Vagina (tissue), 2 donors: ENCODE measurements at regions of chr16 and their contacts with region 1.

Region 1: GRCh38 chr16:71723537-71724319 is 773 bp downstream of the PHLPP2 start:
- DNase-seq: no peak
- H3K4me3 ChIP-seq: peak overlapping the region; percentile 83 to 87
- H3K27ac ChIP-seq: peak overlapping the region; percentile 88
- H3K4me1 ChIP-seq: peaks cover 21% of the 10 kb centered on the region
- H3K27me3 ChIP-seq: no peaks in the 10 kb centered on the region
- CTCF ChIP-seq: no peak
- POLR2A ChIP-seq: peak in 1 of 2 donors; percentile 22

Region 2: DNA sequence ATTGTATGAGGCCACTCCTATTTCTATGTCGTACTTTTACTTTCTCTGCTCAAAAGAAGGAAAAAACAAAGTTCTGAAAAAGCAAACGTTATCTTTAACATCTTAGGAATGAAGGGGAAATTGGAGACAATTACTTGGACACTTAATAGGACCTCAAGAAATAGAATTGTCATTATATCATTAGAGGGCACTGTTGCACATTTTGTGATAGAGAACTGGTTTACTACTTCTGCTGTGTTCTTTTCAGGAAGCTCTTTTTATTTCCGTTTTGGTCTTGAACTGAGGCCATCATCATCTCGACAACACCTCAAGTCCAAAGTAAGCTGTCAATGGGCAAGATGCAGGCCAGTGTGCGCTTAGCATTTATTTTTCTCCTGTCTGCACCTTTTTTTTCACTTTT is 1215.0 kb before region 1 on chr16:
- intact Hi-C with region 1: loop called (anchors 5 kb)
- DNase-seq: no peak
- H3K4me3 ChIP-seq: no peak overlapping the region
- H3K27ac ChIP-seq: no peak overlapping the region
- H3K4me1 ChIP-seq: no peaks in the 10 kb centered on the region
- H3K27me3 ChIP-seq: no peaks in the 10 kb centered on the region
- CTCF ChIP-seq: no peak
- POLR2A ChIP-seq: no peak

Region 3: DNA sequence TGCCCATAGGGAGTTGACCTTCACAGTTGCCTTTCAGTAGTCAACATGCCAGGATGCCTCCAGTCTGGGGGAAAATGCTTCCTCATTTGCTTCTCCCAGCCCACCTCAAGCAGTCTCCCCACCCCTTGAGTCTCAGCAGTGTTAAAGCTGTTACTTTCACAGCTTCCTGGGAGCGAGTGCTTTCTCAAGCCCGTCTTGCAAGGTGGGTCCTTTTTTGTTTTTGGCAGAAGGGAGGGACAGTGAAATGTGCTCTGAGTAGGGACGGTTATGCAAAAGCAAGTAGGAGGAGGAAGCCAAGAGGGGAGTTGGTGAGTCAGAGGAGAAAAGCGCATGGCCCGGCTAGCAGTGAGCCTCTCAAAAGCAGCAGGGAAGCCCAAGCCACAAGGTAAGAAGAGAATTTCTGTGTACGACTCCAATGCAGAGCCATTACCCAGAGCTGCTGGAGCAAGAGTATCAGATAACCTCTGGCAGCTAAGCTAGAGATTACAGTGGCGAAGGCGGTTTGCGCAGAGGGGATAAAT is 197.6 kb before region 1 on chr16 and contains the start of gene CHST4:
- intact Hi-C with region 1: no loop called
- DNase-seq: no peak
- H3K4me3 ChIP-seq: no peak within 1 kb of the TSS
- H3K27ac ChIP-seq: no peak within 1 kb of the TSS
- H3K4me1 ChIP-seq: peaks cover 9% of the 10 kb centered on the region
- H3K27me3 ChIP-seq: no peaks in the 10 kb centered on the region
- CTCF ChIP-seq: no peak
- POLR2A ChIP-seq: no peak
- total RNA-seq, gene CHST4: not detected

Region 4: DNA sequence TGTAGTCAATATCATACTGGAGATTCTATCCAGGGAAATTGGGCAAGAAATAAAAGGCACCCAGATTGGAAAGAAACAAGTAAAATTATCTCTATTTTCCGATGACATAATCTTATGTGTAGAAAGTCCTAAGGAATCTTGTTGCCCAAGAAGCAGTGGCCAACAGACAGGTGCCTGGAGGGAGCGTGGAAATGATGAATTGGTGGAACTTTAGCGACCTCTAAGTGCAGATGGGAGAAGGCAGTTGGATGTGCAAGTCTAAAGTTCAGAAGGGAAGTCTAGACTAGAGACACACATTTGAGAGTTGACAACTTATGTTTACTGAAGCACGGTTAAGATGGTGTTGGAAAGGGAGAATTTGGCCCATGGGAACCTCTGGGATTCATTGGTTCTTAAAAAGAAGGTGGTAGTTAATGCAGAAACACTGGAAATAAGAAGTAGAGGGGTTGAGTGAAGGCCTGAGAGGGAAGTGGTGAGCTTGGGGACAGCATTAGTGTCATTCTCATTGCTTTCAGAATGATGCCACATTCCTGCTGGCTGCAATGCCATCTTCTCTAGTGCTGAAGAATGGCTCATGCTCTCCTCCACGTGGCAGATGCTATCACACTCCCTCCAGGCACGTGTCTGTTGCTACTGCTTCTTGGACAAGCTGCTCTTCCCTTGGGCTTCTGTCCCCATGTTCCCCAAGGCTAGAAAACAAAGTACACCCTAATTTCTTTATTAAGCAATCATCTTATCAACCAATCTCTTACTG is 170.9 kb before region 1 on chr16:
- intact Hi-C with region 1: no loop called
- DNase-seq: no peak
- H3K4me3 ChIP-seq: no peak overlapping the region
- H3K27ac ChIP-seq: no peak overlapping the region
- H3K4me1 ChIP-seq: no peaks in the 10 kb centered on the region
- H3K27me3 ChIP-seq: no peaks in the 10 kb centered on the region
- CTCF ChIP-seq: no peak
- POLR2A ChIP-seq: no peak

Region 5: DNA sequence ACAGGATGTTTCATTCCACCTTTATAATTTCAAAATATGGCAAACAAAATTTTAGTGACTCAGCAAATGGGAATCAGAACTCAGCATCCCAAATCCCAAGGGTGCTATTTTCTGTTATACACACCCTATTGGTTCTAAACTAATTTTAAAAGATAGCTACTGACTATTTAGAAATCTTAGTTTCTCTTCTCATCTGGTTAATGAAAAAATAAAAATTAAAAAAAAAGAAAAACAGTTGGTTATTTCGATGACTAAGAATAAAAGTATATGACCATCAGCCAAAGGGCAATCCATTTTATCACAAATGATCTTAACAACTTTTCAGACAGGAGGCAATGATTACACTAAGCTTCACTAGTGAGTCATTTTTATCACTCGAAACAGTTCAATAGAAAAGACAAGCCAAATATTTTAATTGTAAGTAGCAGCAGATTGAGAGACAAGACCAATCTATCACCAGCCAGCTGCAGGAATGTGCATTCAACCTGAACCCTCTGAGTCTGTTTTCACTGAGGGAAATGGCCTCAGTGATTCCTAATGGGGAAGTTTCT is 14.4 kb before region 1 on chr16:
- intact Hi-C with region 1: no loop called
- DNase-seq: no peak
- H3K4me3 ChIP-seq: no peak overlapping the region
- H3K27ac ChIP-seq: no peak overlapping the region
- H3K4me1 ChIP-seq: peaks cover 23% of the 10 kb centered on the region
- H3K27me3 ChIP-seq: no peaks in the 10 kb centered on the region
- CTCF ChIP-seq: no peak
- POLR2A ChIP-seq: no peak

Region 6: DNA sequence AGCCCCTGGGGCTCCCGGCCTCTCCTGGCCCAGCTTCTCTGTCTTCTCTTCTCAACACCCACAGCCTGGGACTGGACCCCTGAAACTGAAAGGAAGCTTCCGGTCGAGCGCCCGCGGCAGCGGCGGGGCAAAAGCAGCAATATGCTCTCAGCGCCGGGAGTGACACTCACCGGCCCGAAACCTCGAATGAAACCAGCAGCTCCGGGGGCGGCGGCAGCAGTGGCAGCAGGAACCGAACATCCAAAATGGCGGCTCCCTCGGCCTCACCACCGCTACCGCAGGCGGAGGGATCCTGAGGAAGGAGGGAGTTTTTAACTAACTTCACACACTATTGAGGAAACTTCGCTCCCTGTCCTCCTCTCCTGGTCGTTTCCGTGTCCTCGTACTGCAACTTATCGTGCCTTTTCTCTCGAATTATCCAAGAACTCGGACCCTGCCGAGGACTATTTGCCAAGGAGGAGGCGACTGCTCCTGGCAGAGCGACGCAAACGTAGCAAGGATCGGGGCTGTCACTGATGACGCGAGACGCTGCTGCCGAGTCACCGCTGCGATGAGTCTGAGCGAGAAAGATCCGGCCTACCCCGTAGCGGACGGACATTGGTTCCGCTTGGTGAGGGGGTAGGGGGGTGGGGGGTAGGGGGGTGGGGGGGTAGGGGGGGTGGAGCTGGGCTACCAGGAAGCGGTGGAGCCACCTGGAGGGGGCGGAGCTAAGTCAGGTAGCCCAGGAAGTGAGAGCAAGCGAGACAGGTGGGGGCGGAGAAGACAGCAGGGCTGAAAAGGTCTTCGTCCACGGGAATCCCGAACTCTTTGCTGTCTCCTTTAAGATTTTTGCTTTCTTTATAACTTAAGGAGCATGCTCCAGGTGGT is 85.1 kb after region 1 on chr16 and contains the start of gene AP1G1:
- intact Hi-C with region 1: loop called (anchors 10 kb)
- DNase-seq: peak; percentile 96
- H3K4me3 ChIP-seq: peak within 1 kb of the TSS; percentile 56 to 93
- H3K27ac ChIP-seq: peak within 1 kb of the TSS; percentile 99
- H3K4me1 ChIP-seq: peaks cover 42% of the 10 kb centered on the region
- H3K27me3 ChIP-seq: no peaks in the 10 kb centered on the region
- CTCF ChIP-seq: no peak
- POLR2A ChIP-seq: peak in 1 of 2 donors; percentile 42
- total RNA-seq, gene AP1G1: 116 TPM

Region 7: GRCh38 chr16:71883849-71884638 is 160.3 kb after region 1 on chr16 and contains the start of gene ZNF821:
- intact Hi-C with region 1: loop called (anchors 10 kb)
- DNase-seq: no peak
- H3K4me3 ChIP-seq: peak within 1 kb of the TSS; percentile 81 to 98
- H3K27ac ChIP-seq: peak within 1 kb of the TSS; percentile 99
- H3K4me1 ChIP-seq: peaks cover 27% of the 10 kb centered on the region
- H3K27me3 ChIP-seq: no peaks in the 10 kb centered on the region
- CTCF ChIP-seq: peak in 1 of 3 experiments; percentile 9
- POLR2A ChIP-seq: no peak
- total RNA-seq, gene ZNF821: 8.8 TPM